ENCODE measurements at regions of chr2 and their contacts with region 1.

Region 1: GRCh38 chr2:20635675-20636584 is 15.0 kb downstream of the HS1BP3 start:
- DNase-seq: peak; percentile 48 to 86
- H3K4me3 ChIP-seq: no peak overlapping the region
- H3K27ac ChIP-seq: no peak overlapping the region
- H3K4me1 ChIP-seq: peaks cover 37% of the 10 kb centered on the region
- H3K27me3 ChIP-seq: no peaks in the 10 kb centered on the region
- CTCF ChIP-seq: peak; percentile 96

Region 2: GRCh38 chr2:20291106-20291564 is 344.8 kb before region 1 on chr2:
- CTCF ChIA-PET with region 1: no interaction called
- POLR2A ChIA-PET with region 1: no interaction called
- intact Hi-C with region 1: no loop called
- DNase-seq: peak; percentile 57 to 77
- H3K4me3 ChIP-seq: no peak overlapping the region
- H3K27ac ChIP-seq: peak overlapping the region; percentile 32
- H3K4me1 ChIP-seq: peaks cover 29% of the 10 kb centered on the region
- H3K27me3 ChIP-seq: no peaks in the 10 kb centered on the region
- CTCF ChIP-seq: peak; percentile 83

Region 3: GRCh38 chr2:20398956-20399567 is 236.9 kb before region 1 on chr2:
- CTCF ChIA-PET with region 1: interaction called, 7 read pairs
- POLR2A ChIA-PET with region 1: no interaction called
- intact Hi-C with region 1: loop called (anchors 1 kb)
- DNase-seq: peak in 1 of 2 experiments; percentile 34
- H3K4me3 ChIP-seq: no peak overlapping the region
- H3K27ac ChIP-seq: no peak overlapping the region
- H3K4me1 ChIP-seq: no peaks in the 10 kb centered on the region
- H3K27me3 ChIP-seq: no peaks in the 10 kb centered on the region
- CTCF ChIP-seq: no peak

Region 4: DNA sequence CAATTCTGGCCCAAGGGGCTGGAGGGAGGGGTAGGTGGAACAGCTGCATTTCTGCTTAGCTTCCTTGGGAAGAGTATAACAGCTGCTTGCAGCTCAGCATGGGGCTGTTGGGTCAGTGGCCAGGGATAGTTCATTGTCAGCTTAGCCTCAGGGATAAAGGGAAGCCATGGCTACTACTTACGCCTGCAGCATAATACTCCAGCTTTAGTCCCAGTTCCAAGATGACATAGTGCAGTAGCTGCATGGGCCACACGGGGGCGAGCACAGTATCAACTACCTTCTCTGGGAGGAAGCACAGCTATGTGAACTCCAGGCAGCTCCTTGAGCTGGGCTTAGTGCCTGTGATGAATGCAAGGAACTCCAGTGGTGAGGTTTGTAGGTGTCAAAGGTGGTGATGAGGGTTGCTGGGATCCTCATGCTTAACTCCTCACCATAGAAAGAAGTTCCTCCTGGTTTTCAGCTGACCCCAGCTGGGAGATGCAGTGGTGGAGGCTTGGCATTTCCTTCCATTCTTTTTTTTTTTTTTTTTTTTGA is 224.5 kb before region 1 on chr2:
- CTCF ChIA-PET with region 1: interaction called, 10 read pairs
- POLR2A ChIA-PET with region 1: interaction called, 3 read pairs
- intact Hi-C with region 1: loop called (anchors 1 kb)
- DNase-seq: peak; percentile 68 to 83
- H3K4me3 ChIP-seq: no peak overlapping the region
- H3K27ac ChIP-seq: no peak overlapping the region
- H3K4me1 ChIP-seq: no peaks in the 10 kb centered on the region
- H3K27me3 ChIP-seq: no peaks in the 10 kb centered on the region
- CTCF ChIP-seq: peak; percentile 92

Region 5: DNA sequence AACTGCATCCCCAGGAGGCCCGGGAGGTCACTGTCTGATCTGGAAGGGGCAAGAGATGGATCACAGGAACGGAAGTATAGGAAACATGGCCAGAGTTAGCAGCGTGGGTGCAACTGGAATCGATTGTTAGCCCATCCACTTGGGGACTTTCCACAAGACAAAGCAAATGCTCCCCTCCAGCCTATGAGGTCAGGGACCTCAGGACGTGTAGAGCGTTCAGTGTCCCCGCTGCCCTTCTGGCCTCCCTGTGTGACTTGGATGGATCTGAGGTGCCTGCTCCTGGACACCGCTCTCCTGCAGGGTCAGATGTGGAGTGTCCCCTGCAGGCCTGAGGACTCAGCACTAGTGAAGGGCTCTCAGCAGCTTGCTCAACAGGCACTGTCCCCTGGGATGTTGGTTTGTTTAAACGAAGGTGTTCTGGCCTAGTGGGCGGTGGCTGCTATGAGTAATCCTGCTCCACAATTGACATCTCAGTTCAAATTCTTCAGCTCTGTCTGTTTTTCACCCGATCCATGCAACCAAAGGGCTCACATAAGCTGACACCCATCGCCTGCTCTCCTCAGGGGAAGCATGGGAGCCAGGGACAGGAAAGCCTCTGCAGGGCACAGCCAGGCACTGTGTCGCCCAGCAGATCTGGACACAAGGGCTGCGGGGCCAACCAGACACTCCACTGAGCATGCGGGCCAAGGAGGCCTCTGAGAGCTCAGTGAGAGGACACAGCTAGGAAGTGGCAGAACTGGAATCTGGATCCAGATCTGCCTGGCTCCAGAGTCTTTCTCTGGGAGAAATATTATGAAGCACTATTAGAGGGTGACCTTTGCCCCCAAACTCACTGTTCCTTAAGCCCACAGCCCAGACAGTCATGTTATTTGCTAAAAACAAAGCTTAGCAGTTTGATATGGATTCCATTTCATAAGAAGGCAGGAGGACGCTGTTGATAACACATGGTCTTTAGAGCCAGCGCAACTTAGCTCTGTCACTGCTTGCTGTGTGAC is 110.6 kb before region 1 on chr2:
- CTCF ChIA-PET with region 1: no interaction called
- POLR2A ChIA-PET with region 1: no interaction called
- intact Hi-C with region 1: loop called (anchors 1 kb)
- DNase-seq: peak; percentile 68 to 94
- H3K4me3 ChIP-seq: no peak overlapping the region
- H3K27ac ChIP-seq: peak overlapping the region; percentile 70
- H3K4me1 ChIP-seq: peaks cover 41% of the 10 kb centered on the region
- H3K27me3 ChIP-seq: no peaks in the 10 kb centered on the region
- CTCF ChIP-seq: no peak; the same call in 1 of the 2 replicates

Region 6: GRCh38 chr2:20578895-20579825 is 56.8 kb before region 1 on chr2:
- CTCF ChIA-PET with region 1: no interaction called
- POLR2A ChIA-PET with region 1: interaction called, 9 read pairs
- intact Hi-C with region 1: loop called (anchors 1 kb)
- DNase-seq: peak; percentile 76 to 89
- H3K4me3 ChIP-seq: no peak overlapping the region
- H3K27ac ChIP-seq: peak overlapping the region; percentile 94
- H3K4me1 ChIP-seq: peaks cover 64% of the 10 kb centered on the region
- H3K27me3 ChIP-seq: no peaks in the 10 kb centered on the region
- CTCF ChIP-seq: no peak

Region 7: DNA sequence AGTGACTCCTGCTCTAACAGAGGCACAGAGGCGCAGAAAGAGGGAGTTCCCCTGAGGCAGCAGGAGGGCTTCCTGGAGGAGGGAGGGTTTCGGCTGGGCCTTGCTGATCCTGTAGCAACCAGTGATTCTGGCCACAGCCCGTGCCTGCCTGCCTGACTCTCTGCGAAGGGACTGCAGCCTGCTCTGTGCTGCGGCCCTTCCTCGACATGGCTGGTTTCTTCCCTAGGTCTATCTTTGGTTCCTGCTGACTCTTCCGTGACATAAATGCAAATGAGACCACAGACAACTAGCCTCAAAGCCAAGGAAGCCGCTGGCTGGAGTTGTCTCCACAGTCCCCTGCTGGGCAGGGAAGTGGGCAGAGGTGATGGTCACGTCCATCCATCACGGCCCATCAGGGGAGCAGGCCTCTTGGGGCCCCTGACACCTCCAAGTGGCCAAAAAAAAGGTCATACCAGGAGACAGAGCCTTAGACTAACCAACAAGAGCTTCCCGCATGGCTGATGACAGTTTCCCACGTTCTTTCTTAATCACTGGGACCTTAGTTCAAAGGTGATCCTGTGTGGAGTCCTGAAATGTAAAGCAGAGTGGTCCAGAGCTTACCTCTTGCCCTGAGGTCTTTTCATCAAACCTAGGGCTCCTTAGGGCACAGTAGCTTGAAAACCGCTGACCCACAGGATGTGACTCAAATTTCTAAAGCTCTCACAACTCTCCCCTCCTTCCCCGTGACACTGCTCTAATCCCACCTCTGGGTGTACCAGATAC is 40.3 kb before region 1 on chr2:
- CTCF ChIA-PET with region 1: interaction called, 13 read pairs
- POLR2A ChIA-PET with region 1: no interaction called
- intact Hi-C with region 1: loop called (anchors 1 kb)
- DNase-seq: peak; percentile 25 to 92
- H3K4me3 ChIP-seq: peak overlapping the region; percentile 5; the same call in 1 of the 2 replicates
- H3K27ac ChIP-seq: peak overlapping the region; percentile 96
- H3K4me1 ChIP-seq: peaks cover 76% of the 10 kb centered on the region
- H3K27me3 ChIP-seq: no peaks in the 10 kb centered on the region
- CTCF ChIP-seq: no peak; the same call in 1 of the 2 replicates

Region 8: GRCh38 chr2:20617892-20618467 is 17.9 kb before region 1 on chr2:
- CTCF ChIA-PET with region 1: interaction called, 5 read pairs
- POLR2A ChIA-PET with region 1: no interaction called
- intact Hi-C with region 1: loop called (anchors 1 kb)
- DNase-seq: peak; percentile 92 to 95
- H3K4me3 ChIP-seq: no peak overlapping the region
- H3K27ac ChIP-seq: peak overlapping the region; percentile 72
- H3K4me1 ChIP-seq: peaks cover 60% of the 10 kb centered on the region
- H3K27me3 ChIP-seq: no peaks in the 10 kb centered on the region
- CTCF ChIP-seq: peak; percentile 47; the same call in 1 of the 2 replicates

Region 9: DNA sequence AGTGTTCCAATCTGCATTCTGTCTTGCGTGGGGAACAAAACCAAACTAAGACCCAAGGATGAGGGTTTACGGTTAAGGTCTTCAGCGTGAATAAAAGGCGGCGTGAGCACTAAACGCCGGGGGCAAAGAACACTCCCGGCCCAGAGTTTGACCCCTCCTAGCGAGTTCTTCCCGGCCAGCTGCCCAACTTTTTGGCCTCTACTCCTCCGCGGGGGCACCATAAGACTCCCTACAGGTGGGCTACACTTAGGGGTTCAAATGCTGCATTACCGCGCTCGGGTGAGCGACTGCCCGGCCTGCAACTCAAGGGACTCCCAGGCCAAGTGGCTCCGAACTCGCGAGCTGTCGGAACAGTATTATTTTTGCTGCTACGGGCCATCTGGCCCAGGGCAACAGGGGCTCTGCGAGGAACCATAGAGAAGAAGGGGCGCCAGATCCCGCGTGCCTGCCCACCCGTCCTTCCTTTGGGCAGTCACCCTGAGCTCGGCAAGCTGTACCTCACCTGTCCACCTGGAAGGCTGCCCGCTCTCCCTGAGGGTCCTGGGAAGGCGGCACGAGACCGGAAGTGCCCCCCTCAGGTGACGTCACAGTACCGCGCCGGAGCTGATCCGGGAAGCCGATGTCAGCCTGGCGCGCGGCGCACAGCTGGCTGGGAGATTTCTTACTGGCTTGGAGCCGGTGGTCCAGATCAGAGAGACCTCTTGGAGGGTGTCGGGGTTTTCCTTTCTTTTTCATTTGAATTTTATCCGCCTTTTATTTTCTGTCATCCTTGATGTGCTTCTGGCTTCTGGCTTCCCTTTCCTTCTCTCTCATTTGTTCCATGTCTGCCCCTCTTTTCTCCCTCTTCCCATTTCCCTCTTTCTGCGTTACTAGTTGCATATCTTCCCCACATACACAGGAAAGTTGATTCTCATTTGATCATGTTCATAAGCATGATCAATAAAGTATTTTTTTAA is 186.9 kb after region 1 on chr2 and contains the start of gene LDAH:
- CTCF ChIA-PET with region 1: no interaction called
- POLR2A ChIA-PET with region 1: no interaction called
- intact Hi-C with region 1: no loop called
- DNase-seq: peak; percentile 64 to 82
- H3K4me3 ChIP-seq: peak within 1 kb of the TSS; percentile 86
- H3K27ac ChIP-seq: peak within 1 kb of the TSS; percentile 82
- H3K4me1 ChIP-seq: peaks cover 8% of the 10 kb centered on the region
- H3K27me3 ChIP-seq: no peaks in the 10 kb centered on the region
- CTCF ChIP-seq: no peak
- total RNA-seq, gene LDAH: 14.6 and 18.3 TPM in 2 replicates